OCI-LY7 (cell line): ENCODE measurements at regions of chr4 and their contacts with region 1.

Region 1: GRCh38 chr4:39732728-39733127 is 34.8 kb downstream of the UBE2K start:
- DNase-seq: no peak
- H3K4me3 ChIP-seq: no peak overlapping the region
- H3K27ac ChIP-seq: no peak overlapping the region
- H3K4me1 ChIP-seq: peaks cover 4% of the 10 kb centered on the region
- CTCF ChIP-seq: no peak

Region 2: DNA sequence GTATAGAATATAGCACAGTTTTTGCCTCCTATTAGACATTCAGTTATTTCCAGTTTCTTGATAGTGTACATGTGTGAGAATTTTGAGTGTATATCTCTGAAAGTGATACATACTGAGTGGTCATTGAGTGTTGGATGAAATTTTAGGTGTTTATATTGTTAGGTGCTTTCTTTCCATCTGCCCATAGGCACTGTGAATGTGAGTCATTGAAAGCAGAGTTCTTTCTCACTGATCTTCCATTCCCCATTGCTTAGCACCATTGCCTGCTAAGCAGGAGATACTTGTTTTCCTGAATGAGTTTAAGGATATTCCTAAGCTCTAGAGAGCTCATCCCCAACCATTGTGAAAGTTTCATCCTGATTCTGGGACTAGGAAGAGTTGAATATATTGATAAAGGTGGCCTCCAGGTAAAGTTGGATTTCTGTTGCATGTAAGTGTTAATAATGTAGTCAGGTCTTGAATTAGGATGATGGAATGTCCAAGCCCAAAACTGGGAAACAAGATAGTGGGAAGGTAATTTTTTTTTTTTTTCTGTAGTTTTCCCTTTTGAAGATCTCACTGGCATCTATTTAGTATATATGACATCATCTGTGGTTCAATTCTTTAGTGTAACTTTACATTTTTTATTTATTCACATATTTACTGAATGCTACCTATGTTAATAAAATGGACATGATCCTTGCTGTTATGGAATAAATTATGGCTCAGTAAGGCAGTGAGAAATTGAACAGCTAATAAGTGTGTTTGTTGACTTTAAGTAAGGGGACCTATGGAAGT is 12.7 kb before region 1 on chr4:
- CTCF ChIA-PET with region 1: interaction called, 3 read pairs
- POLR2A ChIA-PET with region 1: interaction called, 10 read pairs
- intact Hi-C with region 1: no loop called
- DNase-seq: no peak
- H3K4me3 ChIP-seq: no peak overlapping the region
- H3K27ac ChIP-seq: no peak overlapping the region
- H3K4me1 ChIP-seq: peaks cover 4% of the 10 kb centered on the region
- CTCF ChIP-seq: no peak

Region 3: DNA sequence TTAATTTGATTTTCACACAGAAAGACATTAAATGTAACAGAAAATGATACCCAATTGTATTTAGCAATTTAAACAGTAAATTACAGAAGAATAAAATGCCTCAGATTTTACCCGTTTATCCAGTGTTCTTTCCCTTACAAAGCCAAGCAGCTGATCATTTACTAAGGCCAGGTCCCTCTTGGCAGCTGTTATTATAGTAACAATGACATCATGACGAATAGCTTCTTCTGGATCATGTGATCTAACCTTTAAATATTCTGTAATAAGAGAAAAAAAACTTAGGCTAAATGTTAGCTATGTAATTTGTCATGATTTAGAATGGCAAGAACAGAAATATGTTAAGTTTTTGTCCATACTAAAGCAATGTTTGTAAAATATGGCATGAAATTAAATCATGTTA is 175.6 kb after region 1 on chr4:
- CTCF ChIA-PET with region 1: no interaction called
- POLR2A ChIA-PET with region 1: no interaction called
- intact Hi-C with region 1: no loop called
- DNase-seq: no peak
- H3K4me3 ChIP-seq: no peak overlapping the region
- H3K27ac ChIP-seq: no peak overlapping the region
- H3K4me1 ChIP-seq: no peaks in the 10 kb centered on the region
- CTCF ChIP-seq: no peak